ENCODE measurements at regions of chr1 and their contacts with region 1.

Region 1: DNA sequence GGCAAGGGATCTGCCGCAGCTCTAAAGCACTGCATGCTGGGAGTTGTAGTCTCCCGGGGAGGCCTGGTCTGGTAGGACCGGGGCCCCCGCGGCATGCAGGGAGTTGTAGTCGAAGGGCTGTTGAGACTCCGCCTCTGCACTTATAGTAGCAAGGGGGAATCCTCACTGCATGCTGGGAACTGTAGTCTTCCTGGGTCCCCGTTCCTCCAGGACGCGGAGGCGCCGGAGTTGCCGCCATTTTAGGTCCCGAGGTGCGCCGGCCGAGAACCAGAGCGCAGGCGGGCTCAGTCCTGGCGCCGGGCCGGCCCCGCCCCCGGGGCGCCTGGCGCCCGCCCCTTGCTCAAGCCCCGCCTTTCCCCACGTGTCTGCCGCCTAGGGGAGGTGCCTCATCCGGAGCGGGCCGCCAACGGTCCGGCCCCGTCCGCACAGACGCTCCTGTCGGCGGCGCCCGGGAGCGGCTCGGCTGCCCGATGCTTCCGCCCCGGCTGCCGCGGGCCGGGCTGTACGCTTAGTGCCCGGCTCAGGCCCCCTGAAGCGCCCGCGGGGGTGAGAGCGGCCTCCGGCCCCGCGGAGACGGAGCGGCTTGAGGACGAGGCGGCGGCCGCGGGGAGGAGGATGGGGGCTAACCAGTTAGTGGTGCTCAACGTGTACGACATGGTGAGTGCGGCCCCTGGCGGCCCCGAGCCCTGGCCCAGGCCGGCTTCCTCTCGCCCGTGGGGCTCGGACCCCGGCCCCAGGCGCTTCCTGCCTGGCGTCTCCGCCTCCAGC is at the start of gene DESI2:
- DNase-seq: peak; percentile 98
- H3K4me3 Mint-ChIP-seq: peak within 1 kb of the TSS; percentile 82
- H3K27ac Mint-ChIP-seq: peak within 1 kb of the TSS; percentile 71
- H3K4me1 Mint-ChIP-seq: peaks cover 20% of the 10 kb centered on the region
- H3K27me3 Mint-ChIP-seq: peaks cover 1% of the 10 kb centered on the region
- total RNA-seq, gene DESI2: 27.4 TPM in 2 replicates

Region 2: DNA sequence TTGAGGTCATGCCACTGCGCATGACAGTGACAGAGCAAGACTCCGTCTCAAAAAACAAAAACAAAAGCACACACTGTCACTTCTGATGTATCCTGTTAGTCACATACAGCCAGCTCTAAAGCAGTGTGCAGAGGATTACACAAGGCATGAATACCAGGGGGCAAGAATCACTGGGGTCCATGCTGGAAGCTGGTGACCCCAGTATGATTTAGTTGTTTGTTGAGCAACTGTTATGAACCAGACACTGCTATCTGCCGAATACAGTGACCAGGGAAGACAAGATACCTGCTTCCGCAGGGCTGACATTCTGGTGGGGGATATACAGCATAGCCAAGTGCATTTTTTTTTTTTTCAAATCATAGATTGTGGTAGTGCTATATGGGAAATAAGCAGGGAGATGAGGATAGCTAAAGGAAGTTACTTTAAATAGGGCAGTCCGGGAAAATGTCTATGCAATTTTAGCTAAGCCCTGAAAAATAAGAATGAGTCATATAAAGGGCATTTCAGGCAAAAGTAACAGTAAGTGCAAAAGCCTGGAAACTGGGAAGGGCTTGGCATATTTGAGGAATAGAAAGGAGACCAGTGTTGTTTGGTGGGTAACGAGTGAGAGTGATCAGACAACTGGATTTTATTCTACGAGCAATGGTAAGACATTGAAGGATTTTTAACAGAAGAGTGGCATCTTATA is 270.9 kb before region 1 on chr1:
- intact Hi-C with region 1: no loop called
- DNase-seq: no peak
- H3K4me3 Mint-ChIP-seq: no peak overlapping the region
- H3K27ac Mint-ChIP-seq: no peak overlapping the region
- H3K4me1 Mint-ChIP-seq: no peaks in the 10 kb centered on the region
- H3K27me3 Mint-ChIP-seq: no peaks in the 10 kb centered on the region

Region 3: DNA sequence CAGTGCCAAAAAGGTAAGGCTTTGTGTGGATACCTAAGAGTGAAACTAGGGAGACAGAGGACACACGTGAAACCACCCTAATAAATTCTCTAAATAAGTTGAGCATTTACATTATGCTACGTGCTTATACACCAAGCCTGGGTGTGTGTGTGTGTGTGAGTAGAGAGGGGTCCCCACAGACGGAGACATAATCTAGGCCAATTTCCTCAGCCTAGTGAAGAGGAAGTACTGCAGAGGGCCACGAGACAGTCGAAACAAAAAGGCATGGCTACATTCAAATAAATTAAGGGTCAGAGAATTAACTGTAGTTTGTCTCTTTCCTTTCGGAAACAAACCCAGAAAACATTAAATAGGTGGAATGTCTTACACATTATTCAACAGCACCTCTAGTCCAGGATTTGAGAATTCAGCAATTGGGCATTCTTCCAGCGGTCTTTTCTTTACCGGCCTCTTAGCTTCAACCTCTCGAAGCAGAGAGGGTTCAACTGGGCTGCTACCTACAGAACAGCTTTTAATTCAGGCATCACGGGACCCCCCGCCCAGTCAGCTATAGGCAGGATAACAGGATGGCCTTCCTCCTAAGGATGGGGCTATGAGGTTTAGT is 75.1 kb after region 1 on chr1:
- intact Hi-C with region 1: loop called (anchors 5 kb)
- DNase-seq: no peak
- H3K4me3 Mint-ChIP-seq: no peak overlapping the region
- H3K27ac Mint-ChIP-seq: no peak overlapping the region
- H3K4me1 Mint-ChIP-seq: peaks cover 9% of the 10 kb centered on the region
- H3K27me3 Mint-ChIP-seq: peaks cover 53% of the 10 kb centered on the region